Mammary epithelial cell (primary cell): ENCODE measurements at regions of chr1 and their contacts with region 1.

Region 1: GRCh38 chr1:219385786-219386427 is 212.2 kb downstream of the LYPLAL1 start:
- DNase-seq: peak; percentile 48
- H3K4me3 ChIP-seq: no peak overlapping the region
- H3K27ac ChIP-seq: no peak overlapping the region
- H3K4me1 ChIP-seq: no peaks in the 10 kb centered on the region
- H3K27me3 ChIP-seq: no peaks in the 10 kb centered on the region
- CTCF ChIP-seq: peak; percentile 95 to 96

Region 2: GRCh38 chr1:218330043-218330623 is 1055.8 kb before region 1 on chr1:
- CTCF ChIA-PET with region 1: no interaction called
- dilution Hi-C with region 1: no loop called
- in situ Hi-C with region 1: loop called (anchors 25 kb)
- intact Hi-C with region 1: loop called (anchors 1 kb)
- DNase-seq: peak; percentile 18
- H3K4me3 ChIP-seq: no peak overlapping the region
- H3K27ac ChIP-seq: no peak overlapping the region
- H3K4me1 ChIP-seq: no peaks in the 10 kb centered on the region
- H3K27me3 ChIP-seq: no peaks in the 10 kb centered on the region
- CTCF ChIP-seq: peak; percentile 51

Region 3: GRCh38 chr1:218686258-218686657 is 699.6 kb before region 1 on chr1:
- CTCF ChIA-PET with region 1: no interaction called
- dilution Hi-C with region 1: no loop called
- in situ Hi-C with region 1: no loop called
- intact Hi-C with region 1: loop called (anchors 5 kb)
- DNase-seq: peak; percentile 57
- H3K4me3 ChIP-seq: no peak overlapping the region
- H3K27ac ChIP-seq: no peak overlapping the region
- H3K4me1 ChIP-seq: peaks cover 14% of the 10 kb centered on the region
- H3K27me3 ChIP-seq: no peaks in the 10 kb centered on the region
- CTCF ChIP-seq: no peak

Region 4: DNA sequence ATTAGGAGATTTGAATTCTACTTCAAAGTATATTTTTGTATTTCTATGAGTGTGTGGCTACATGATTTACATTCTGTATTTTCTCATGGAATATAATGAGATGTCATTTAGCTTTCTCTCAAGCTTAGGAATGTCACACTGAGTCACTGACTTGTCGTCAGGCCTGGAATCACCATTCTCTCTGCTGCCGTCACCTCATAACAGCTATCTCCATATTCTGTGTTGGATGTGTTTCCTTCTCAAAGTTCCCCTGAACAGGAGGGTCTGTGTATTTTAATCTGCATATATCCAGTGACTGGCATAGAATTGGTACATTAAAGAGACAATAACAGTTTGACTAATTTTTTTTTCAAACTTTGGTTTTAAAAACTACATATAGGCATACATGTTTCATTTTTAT is 176.3 kb before region 1 on chr1:
- CTCF ChIA-PET with region 1: no interaction called
- dilution Hi-C with region 1: no loop called
- in situ Hi-C with region 1: no loop called
- intact Hi-C with region 1: loop called (anchors 1 kb)
- DNase-seq: no peak
- H3K4me3 ChIP-seq: no peak overlapping the region
- H3K27ac ChIP-seq: no peak overlapping the region
- H3K4me1 ChIP-seq: no peaks in the 10 kb centered on the region
- H3K27me3 ChIP-seq: no peaks in the 10 kb centered on the region
- CTCF ChIP-seq: no peak

Region 5: GRCh38 chr1:219566951-219567947 is 181.3 kb after region 1 on chr1:
- CTCF ChIA-PET with region 1: no interaction called
- dilution Hi-C with region 1: no loop called
- in situ Hi-C with region 1: no loop called
- intact Hi-C with region 1: loop called (anchors 2 kb)
- DNase-seq: peak; percentile 17
- H3K4me3 ChIP-seq: no peak overlapping the region
- H3K27ac ChIP-seq: no peak overlapping the region
- H3K4me1 ChIP-seq: no peaks in the 10 kb centered on the region
- H3K27me3 ChIP-seq: peaks cover 5% of the 10 kb centered on the region
- CTCF ChIP-seq: peak; percentile 55 to 67

Region 6: DNA sequence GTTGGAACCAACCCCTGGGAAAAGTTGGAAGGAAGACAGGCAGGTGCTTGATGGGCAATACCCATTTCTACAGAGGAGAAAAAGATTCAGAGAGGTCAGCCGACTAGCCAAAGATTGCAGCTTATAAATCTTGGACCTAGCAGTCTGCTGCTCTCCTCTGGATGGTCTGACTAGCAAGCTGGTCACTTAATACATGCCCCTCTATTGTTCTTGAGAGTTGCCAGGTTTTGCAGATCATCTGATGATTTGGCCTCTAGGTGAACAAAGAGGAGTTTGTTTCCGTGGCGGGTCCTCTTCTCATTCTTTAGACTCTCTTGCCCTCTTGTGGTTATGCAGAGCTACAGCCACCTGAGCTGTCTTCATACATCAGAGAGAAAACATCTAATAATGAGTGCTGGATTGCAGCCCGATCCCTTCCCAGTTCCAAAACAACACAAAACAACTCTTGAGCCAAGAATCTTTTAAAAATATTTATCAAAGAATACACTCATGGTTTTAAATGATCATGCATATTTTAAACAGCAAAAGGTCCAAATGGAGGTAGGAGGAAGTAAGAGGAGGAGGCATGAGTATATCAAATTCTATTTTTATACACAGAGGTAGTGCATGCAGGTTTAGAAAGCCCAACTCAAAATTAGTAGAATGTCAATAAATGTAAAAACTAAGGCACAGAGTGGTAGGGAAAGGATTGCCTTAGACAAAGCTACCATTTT is 426.7 kb after region 1 on chr1:
- CTCF ChIA-PET with region 1: no interaction called
- dilution Hi-C with region 1: no loop called
- in situ Hi-C with region 1: no loop called
- intact Hi-C with region 1: loop called (anchors 2 kb)
- DNase-seq: peak; percentile 63
- H3K4me3 ChIP-seq: no peak overlapping the region
- H3K27ac ChIP-seq: no peak overlapping the region
- H3K4me1 ChIP-seq: no peaks in the 10 kb centered on the region
- H3K27me3 ChIP-seq: peaks cover 21% of the 10 kb centered on the region
- CTCF ChIP-seq: peak; percentile 87 to 94